ENCODE measurements at regions of chr6 and their contacts with region 1.

Region 1: DNA sequence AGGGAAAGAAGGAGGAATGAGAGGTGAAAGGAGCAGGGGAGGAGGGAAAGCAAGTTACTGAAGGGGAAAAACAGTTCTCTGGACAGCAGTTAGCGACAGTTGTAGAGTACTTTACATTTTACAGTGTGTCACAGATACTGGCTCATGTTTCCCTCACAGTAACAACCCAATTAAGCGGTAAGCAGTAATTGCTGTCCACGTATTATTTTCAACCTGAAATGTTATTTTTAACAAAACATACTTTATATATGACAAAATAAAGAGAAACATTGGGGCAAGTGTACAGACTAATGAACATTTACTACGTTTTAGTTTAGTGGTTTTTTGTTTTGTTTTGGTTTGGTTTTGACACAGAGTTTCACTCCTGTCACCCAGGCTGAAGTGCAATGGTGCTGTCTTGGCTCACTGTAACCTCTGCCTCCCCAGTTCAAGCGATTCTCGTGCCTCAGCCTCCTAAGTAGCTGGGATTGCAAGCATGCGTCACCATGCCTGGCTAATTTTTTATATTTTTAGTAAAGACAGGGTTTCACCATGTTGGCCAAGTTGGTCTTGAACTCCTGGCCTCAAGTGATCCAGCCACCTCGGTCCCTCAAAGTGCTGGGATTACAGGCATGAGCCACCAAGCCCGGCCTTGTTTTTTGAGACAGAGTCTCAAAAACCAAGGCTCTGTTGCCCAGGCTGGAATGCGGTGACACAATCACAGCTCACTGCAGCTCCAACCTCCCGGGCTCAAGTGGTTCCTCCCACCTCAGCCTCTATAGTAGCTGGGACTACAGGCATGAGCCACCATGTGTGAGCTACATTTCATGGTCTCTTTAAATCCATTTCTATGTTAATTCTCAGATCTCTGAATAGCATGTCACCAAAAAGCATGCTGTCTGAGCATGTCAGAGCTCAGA is 22.6 kb upstream of the BTN3A2 start:
- H3K4me3 Mint-ChIP-seq: no peak overlapping the region
- H3K27ac Mint-ChIP-seq: peak overlapping the region; percentile 5
- H3K4me1 Mint-ChIP-seq: peaks cover 20% of the 10 kb centered on the region
- H3K27me3 Mint-ChIP-seq: peaks cover 14% of the 10 kb centered on the region

Region 2: DNA sequence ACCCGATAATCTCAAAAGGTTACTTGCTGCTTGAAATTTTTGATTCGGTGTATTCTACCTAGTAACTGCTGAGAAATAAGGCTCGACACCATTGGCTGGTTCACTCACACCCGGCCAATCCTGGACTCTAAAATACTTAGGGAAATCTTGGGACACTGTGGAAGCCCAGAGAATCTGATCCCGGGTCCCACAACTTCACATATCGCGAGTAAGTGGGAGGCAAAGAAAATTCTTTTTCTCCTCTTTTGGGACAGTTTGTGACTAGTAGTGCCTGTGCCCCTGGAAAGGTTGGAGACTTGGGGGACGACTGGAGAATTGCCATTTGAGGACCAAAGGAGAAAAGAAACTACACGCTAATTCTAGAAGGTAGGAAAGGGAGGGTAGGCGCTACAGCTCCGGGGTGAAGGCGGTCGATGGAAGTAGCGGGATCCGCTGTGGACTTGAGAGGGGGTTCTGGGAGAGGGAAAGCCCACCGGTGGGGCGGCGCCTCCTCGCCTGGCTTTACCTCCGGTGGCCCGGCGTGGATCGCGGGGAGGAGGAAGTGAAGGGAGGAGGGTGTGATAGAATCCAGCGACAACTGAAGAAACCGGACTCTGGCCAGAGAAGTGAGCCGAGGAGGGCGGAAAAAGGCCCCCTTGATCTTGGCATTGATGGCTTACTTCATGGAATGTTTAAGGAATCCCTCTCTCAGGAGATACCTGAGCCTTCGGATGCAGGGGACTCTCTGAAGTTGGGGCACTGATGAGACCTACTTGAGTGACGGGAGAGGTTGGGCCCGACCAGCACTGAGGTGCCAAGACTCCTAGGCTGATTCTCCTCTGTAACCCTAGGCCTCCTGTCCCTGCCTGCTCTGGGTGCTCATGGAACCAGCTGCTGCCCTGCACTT is 79.1 kb after region 1 on chr6:
- intact Hi-C with region 1: loop called (anchors 5 kb)
- H3K4me3 Mint-ChIP-seq: no peak overlapping the region
- H3K27ac Mint-ChIP-seq: no peak overlapping the region
- H3K4me1 Mint-ChIP-seq: peaks cover 35% of the 10 kb centered on the region
- H3K27me3 Mint-ChIP-seq: no peaks in the 10 kb centered on the region

Region 3: DNA sequence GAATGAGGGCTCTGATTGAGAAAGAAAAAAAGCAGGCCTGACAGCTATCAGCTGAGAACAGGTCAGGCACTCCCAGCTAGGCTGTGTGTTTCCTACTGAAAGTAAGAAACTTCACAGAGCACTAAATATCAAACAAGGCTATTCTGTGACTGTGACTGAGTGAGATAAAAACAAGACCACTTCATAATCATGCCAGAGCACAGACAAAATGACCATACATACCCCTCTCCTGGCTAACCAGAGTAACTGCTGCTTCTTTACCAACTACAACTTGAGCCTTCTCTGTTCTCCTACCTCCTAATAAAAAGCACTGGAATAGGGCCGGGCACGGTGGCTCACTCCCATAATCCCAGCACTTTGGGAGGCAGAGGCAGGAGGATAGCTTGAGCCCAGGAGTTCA is 150.9 kb after region 1 on chr6:
- intact Hi-C with region 1: loop called (anchors 5 kb)
- H3K4me3 Mint-ChIP-seq: no peak overlapping the region
- H3K27ac Mint-ChIP-seq: peak overlapping the region; percentile 3
- H3K4me1 Mint-ChIP-seq: peaks cover 52% of the 10 kb centered on the region
- H3K27me3 Mint-ChIP-seq: peaks cover 7% of the 10 kb centered on the region

Region 4: DNA sequence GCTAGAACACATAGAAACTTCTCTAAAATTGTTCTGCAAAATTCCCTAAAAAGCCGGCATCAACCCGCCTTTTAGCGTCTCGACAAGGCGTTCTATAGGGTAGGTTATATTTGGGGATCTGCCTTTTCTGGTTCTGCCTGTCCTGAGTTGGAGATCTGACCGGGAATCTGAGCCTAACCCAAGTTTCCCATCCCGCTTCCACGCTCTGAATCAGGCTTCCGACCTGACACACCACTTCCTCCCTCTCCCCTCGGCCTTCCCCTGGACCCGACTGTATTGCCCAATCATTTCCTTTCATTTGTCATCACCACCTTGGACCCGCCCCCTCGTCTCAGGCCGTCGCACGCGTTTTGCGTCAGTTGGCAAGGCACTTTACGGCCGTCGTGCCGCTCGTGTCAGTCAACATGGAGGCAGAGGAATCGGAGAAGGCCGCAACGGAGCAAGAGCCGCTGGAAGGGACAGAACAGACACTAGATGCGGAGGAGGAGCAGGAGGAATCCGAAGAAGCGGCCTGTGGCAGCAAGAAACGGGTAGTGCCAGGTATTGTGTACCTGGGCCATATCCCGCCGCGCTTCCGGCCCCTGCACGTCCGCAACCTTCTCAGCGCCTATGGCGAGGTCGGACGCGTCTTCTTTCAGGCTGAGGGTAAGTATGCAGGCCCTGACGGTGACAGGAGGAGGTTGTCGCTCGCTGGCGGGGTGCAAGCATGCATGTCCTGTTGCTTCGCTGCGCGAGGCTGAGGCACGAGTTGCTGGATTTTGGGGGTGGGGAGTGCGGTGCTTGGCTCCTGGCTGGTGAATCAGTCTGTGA is 254.4 kb after region 1 on chr6 and contains the start of gene ABT1:
- intact Hi-C with region 1: loop called (anchors 1 kb)
- H3K4me3 Mint-ChIP-seq: no peak within 1 kb of the TSS
- H3K27ac Mint-ChIP-seq: no peak within 1 kb of the TSS
- H3K4me1 Mint-ChIP-seq: peaks cover 30% of the 10 kb centered on the region
- H3K27me3 Mint-ChIP-seq: peaks cover 24% of the 10 kb centered on the region

Region 5: GRCh38 chr6:26754212-26754611 is 411.9 kb after region 1 on chr6:
- intact Hi-C with region 1: no loop called
- H3K4me3 Mint-ChIP-seq: no peak overlapping the region
- H3K27ac Mint-ChIP-seq: no peak overlapping the region
- H3K4me1 Mint-ChIP-seq: no peaks in the 10 kb centered on the region
- H3K27me3 Mint-ChIP-seq: peaks cover 55% of the 10 kb centered on the region